Naive thymus-derived CD4-positive, alpha-beta T cell (primary cell): ENCODE measurements at regions of chrX and their contacts with region 1.

Region 1: GRCh38 chrX:19682712-19683331 is 167.5 kb upstream of the MAP3K15 start:
- DNase-seq: peak; percentile 24 to 88 (median 81)
- ATAC-seq: peak; percentile 97
- H3K4me3 ChIP-seq: no peak overlapping the region
- H3K4me3 Mint-ChIP-seq: peak overlapping the region in 9 of 10 donors; percentile 4 to 85 (median 67)
- H3K27ac ChIP-seq: peak overlapping the region; percentile 81
- H3K27ac Mint-ChIP-seq: peak overlapping the region; percentile 85 to 100 (median 98)
- H3K4me1 ChIP-seq: peaks cover 30 to 37% of the 10 kb centered on the region in 2 donors
- H3K4me1 Mint-ChIP-seq: peaks cover 43 to 88% (median 82%) of the 10 kb centered on the region in 7 donors
- H3K27me3 ChIP-seq: no peaks in the 10 kb centered on the region
- H3K27me3 Mint-ChIP-seq: no peaks in the 10 kb centered on the region

Region 2: DNA sequence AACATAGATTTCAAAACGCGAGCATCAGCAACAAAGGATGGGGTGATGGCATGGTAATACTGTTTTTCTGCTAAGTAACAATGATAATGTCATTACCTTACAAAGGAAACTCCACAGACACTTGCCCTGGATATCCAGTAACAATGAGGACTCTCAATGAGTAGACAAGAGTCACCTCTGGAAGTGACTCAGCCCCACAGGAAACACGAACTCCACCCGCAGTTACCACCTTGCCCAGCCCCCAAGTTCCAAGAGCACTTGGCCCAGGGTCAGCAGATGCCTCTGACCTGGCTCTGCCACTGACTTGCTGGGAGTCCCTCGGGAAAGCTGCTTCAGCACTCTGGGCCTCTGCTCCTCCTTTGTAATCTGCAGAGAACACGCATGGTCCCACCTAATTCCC is 57.2 kb before region 1 on chrX:
- CTCF ChIA-PET with region 1: no interaction called
- POLR2A ChIA-PET with region 1: no interaction called
- intact Hi-C with region 1: loop called in 1 of 2 experiments (anchors 2 kb)
- DNase-seq: peak in 1 of 9 donors; percentile 53
- ATAC-seq: no peak
- H3K4me3 ChIP-seq: no peak overlapping the region
- H3K4me3 Mint-ChIP-seq: peak overlapping the region in 2 of 10 donors; percentile 14 to 75
- H3K27ac ChIP-seq: peak overlapping the region; percentile 7
- H3K27ac Mint-ChIP-seq: peak overlapping the region in 7 of 9 donors; percentile 37 to 90 (median 81)
- H3K4me1 ChIP-seq: peaks cover 0 to 27% of the 10 kb centered on the region in 2 donors
- H3K4me1 Mint-ChIP-seq: peaks cover 0 to 56% (median 37%) of the 10 kb centered on the region in 7 donors
- H3K27me3 ChIP-seq: no peaks in the 10 kb centered on the region
- H3K27me3 Mint-ChIP-seq: no peaks in the 10 kb centered on the region

Region 3: DNA sequence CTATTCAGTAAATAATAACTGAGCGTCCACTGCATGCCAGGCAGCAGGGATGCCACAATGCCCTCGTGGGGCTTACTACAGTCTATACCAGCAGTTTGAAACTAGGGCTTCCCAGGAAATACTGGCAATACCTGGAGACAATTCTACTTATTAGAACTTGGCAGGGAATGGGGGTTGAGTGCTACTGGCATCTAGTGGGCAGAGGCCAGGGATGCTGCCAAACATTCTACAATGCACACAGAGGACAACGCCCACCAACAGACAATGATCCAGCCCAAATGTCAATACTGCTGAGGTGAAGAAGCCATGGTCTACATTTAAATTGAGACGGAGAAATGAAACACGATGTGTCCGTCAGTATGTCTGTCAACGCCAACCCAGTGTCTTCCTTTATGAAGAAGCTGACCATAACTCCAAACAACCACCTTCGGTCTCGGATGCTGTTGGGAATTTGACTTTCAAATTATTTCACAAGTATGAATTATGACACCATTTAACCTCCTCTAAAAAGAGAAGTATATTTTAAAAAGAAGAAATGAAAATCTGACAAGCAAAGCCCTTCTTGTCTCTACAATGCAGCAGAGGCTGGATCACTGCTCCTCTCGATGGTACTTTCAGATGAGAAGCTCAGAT is 43.9 kb before region 1 on chrX:
- CTCF ChIA-PET with region 1: no interaction called
- POLR2A ChIA-PET with region 1: no interaction called
- intact Hi-C with region 1: loop called (anchors 1 to 5 kb)
- DNase-seq: no peak
- ATAC-seq: no peak
- H3K4me3 ChIP-seq: no peak overlapping the region
- H3K4me3 Mint-ChIP-seq: no peak overlapping the region
- H3K27ac ChIP-seq: no peak overlapping the region
- H3K27ac Mint-ChIP-seq: peak overlapping the region in 3 of 9 donors; percentile 36 to 68 (median 52)
- H3K4me1 ChIP-seq: no peaks in the 10 kb centered on the region
- H3K4me1 Mint-ChIP-seq: peaks cover 8 to 45% (median 28%) of the 10 kb centered on the region in 7 donors
- H3K27me3 ChIP-seq: no peaks in the 10 kb centered on the region
- H3K27me3 Mint-ChIP-seq: no peaks in the 10 kb centered on the region

Region 4: GRCh38 chrX:19698125-19698524 is 15.3 kb after region 1 on chrX:
- CTCF ChIA-PET with region 1: no interaction called
- POLR2A ChIA-PET with region 1: interaction called, 3 read pairs
- intact Hi-C with region 1: loop called in 1 of 2 experiments (anchors 2 kb)
- DNase-seq: no peak
- ATAC-seq: no peak
- H3K4me3 ChIP-seq: no peak overlapping the region
- H3K4me3 Mint-ChIP-seq: no peak overlapping the region
- H3K27ac ChIP-seq: no peak overlapping the region
- H3K27ac Mint-ChIP-seq: peak overlapping the region in 2 of 9 donors; percentile 14 to 69
- H3K4me1 ChIP-seq: peaks cover 0 to 6% of the 10 kb centered on the region in 2 donors
- H3K4me1 Mint-ChIP-seq: peaks cover 13 to 70% (median 44%) of the 10 kb centered on the region in 7 donors
- H3K27me3 ChIP-seq: no peaks in the 10 kb centered on the region
- H3K27me3 Mint-ChIP-seq: no peaks in the 10 kb centered on the region

Region 5: DNA sequence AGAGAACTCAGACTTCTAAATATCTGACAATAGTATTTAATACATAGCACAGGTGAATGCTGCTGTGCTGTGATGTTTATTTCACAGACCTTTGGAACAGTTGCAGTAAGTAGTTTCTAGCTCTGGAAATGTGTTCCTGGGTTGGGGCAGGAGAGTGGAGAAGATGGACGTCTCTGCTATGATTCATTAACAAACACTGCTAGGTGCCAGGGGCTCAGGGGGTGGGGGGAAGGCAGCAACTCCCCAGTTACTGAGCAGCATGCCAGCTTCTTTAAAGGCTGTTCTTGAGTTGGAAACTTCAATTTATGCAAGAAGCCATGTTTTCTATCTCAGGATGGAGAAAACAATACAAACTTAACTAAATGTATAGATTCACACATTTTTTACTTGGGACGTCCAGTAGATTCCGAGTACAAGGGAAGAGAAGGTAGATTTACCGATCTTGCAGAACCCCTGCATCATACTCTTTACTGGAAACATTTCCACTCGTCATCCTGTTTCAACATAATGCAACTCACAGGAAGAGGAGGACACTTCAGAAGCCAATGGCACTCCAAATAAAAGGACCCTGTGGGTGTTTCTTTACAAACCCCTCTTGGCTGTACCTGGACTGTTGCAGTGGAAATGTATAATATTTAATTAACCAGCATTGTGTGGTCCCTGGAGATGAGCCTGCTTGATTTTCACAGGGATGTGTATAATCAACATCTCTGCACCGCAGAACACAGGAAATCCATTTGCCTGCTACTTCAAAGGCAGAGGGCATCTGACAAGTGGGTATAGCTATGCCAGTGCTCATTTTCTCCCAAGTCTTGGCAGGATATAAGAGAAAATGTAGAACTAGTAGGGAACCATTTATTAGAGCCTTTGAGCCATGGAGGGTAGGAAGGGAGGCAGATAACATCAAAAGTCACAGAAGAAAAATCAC is 33.2 kb after region 1 on chrX:
- CTCF ChIA-PET with region 1: no interaction called
- POLR2A ChIA-PET with region 1: interaction called, 3 read pairs
- intact Hi-C with region 1: loop called (anchors 5 kb)
- DNase-seq: peak in 2 of 9 donors; percentile 1 to 13
- ATAC-seq: peak; percentile 40
- H3K4me3 ChIP-seq: no peak overlapping the region
- H3K4me3 Mint-ChIP-seq: peak overlapping the region in 8 of 10 donors; percentile 16 to 53 (median 46)
- H3K27ac ChIP-seq: no peak overlapping the region
- H3K27ac Mint-ChIP-seq: peak overlapping the region in 8 of 9 donors; percentile 26 to 91 (median 58)
- H3K4me1 ChIP-seq: peaks cover 11 to 17% of the 10 kb centered on the region in 2 donors
- H3K4me1 Mint-ChIP-seq: peaks cover 25 to 89% (median 66%) of the 10 kb centered on the region in 7 donors
- H3K27me3 ChIP-seq: no peaks in the 10 kb centered on the region
- H3K27me3 Mint-ChIP-seq: no peaks in the 10 kb centered on the region

Region 6: DNA sequence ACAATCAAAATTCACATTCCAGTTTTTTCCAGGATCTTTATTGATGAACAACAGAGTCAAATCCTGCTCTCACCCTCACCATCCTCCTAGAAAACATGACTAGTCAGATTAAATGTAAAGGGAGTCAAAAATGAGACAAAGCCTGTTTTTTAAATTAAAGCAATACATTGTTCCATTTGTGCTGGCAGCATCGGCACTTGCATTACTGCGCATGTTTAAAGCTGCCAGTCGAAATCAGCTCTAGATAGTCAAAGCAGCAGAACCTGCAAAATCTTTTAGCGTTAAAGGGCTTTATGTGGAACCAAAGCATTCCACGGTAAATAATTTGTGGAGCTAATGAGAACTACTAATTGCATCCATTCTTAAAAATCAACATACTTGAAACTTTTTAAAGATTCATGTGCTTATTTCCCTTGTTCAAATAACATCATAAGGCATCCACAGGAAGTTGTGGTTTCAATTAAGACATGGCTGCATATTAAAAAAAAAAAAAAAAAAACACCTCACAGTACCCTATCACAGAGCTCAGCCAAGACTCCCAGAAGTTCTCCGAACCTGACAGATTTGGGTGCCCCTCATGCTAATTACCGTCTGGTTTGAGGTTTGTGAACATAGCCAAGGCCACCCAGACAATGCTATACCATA is 122.3 kb after region 1 on chrX:
- CTCF ChIA-PET with region 1: no interaction called
- POLR2A ChIA-PET with region 1: no interaction called
- intact Hi-C with region 1: loop called in 1 of 2 experiments (anchors 2 kb)
- DNase-seq: peak in 7 of 9 donors; percentile 29 to 66 (median 46)
- ATAC-seq: peak; percentile 75
- H3K4me3 ChIP-seq: peak overlapping the region; percentile 57
- H3K4me3 Mint-ChIP-seq: peak overlapping the region; percentile 56 to 78 (median 75)
- H3K27ac ChIP-seq: peak overlapping the region; percentile 61
- H3K27ac Mint-ChIP-seq: peak overlapping the region; percentile 81 to 95 (median 89)
- H3K4me1 ChIP-seq: peaks cover 42 to 46% of the 10 kb centered on the region in 2 donors
- H3K4me1 Mint-ChIP-seq: peaks cover 0 to 66% (median 54%) of the 10 kb centered on the region in 7 donors
- H3K27me3 ChIP-seq: no peaks in the 10 kb centered on the region
- H3K27me3 Mint-ChIP-seq: no peaks in the 10 kb centered on the region

Region 7: DNA sequence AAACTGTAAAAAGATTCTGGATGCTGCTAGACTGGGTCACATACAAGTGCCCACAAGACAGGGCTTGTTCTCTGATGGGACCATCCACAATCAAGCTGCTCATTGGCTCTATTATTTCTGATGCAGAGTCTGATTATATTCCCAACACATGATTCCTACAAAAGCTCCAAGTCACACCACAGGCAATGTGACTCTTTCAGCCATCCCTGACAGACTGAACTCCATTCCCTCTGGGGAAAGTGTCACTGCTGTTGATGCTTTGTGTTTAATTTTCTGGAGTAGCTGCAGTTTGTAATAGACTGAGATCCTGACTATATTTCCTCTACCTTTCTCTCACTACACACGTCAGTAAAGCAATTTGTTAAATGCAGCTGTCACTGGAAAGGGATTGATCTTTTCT is 363.4 kb after region 1 on chrX:
- CTCF ChIA-PET with region 1: no interaction called
- POLR2A ChIA-PET with region 1: no interaction called
- intact Hi-C with region 1: no loop called
- DNase-seq: no peak
- ATAC-seq: no peak
- H3K4me3 ChIP-seq: no peak overlapping the region
- H3K4me3 Mint-ChIP-seq: no peak overlapping the region
- H3K27ac ChIP-seq: no peak overlapping the region
- H3K27ac Mint-ChIP-seq: no peak overlapping the region
- H3K4me1 ChIP-seq: no peaks in the 10 kb centered on the region
- H3K4me1 Mint-ChIP-seq: no peaks in the 10 kb centered on the region
- H3K27me3 ChIP-seq: no peaks in the 10 kb centered on the region
- H3K27me3 Mint-ChIP-seq: peaks cover 0 to 3% (median 0%) of the 10 kb centered on the region in 5 donors